Mammary epithelial cell (primary cell): ENCODE measurements at regions of chr16 and their contacts with region 1.

Region 1: GRCh38 chr16:24800586-24800985 is 45.2 kb upstream of the SLC5A11 start:
- DNase-seq: peak; percentile 79
- H3K4me3 ChIP-seq: no peak overlapping the region
- H3K27ac ChIP-seq: no peak overlapping the region
- H3K4me1 ChIP-seq: peaks cover 12% of the 10 kb centered on the region
- H3K27me3 ChIP-seq: no peaks in the 10 kb centered on the region
- CTCF ChIP-seq: peak; percentile 38 to 62

Region 2: GRCh38 chr16:24516900-24517669 is 283.5 kb before region 1 on chr16:
- CTCF ChIA-PET with region 1: no interaction called
- dilution Hi-C with region 1: no loop called
- in situ Hi-C with region 1: no loop called
- intact Hi-C with region 1: loop called (anchors 1 kb)
- DNase-seq: peak; percentile 71
- H3K4me3 ChIP-seq: no peak overlapping the region
- H3K27ac ChIP-seq: no peak overlapping the region
- H3K4me1 ChIP-seq: no peaks in the 10 kb centered on the region
- H3K27me3 ChIP-seq: no peaks in the 10 kb centered on the region
- CTCF ChIP-seq: peak; percentile 93 to 95

Region 3: GRCh38 chr16:24539291-24539849 is 261.2 kb before region 1 on chr16 and contains the start of gene RBBP6:
- CTCF ChIA-PET with region 1: interaction called, 4 read pairs
- dilution Hi-C with region 1: loop called (anchors 5 kb)
- in situ Hi-C with region 1: no loop called
- intact Hi-C with region 1: no loop called
- DNase-seq: peak; percentile 96
- H3K4me3 ChIP-seq: peak within 1 kb of the TSS; percentile 87 to 98 (median 97)
- H3K27ac ChIP-seq: peak within 1 kb of the TSS; percentile 93
- H3K4me1 ChIP-seq: peaks cover 18% of the 10 kb centered on the region
- H3K27me3 ChIP-seq: no peaks in the 10 kb centered on the region
- CTCF ChIP-seq: peak in 1 of 2 donors; percentile 38
- total RNA-seq, gene RBBP6: 33.0 to 40.4 TPM

Region 4: DNA sequence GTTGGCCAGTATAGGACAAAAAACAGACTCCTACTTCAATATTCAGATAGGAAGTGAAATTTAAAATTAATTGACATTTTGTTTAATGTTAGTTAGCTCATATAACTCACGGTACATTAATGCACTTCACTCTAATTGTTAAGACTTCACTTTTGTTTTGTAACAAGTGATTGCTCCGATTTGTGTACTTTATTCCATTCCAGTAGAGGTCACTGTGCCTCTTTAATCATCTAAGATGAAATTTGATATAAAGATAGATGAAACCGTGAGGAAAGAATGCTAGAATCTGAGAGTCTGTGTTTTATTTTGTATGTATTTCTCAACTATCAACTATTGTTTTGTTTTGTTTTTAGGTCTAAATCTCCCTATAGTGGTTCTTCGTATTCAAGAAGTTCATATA is 232.2 kb before region 1 on chr16:
- CTCF ChIA-PET with region 1: no interaction called
- dilution Hi-C with region 1: no loop called
- in situ Hi-C with region 1: loop called in 1 of 2 experiments (anchors 10 kb)
- intact Hi-C with region 1: no loop called
- DNase-seq: peak; percentile 8
- H3K4me3 ChIP-seq: no peak overlapping the region
- H3K27ac ChIP-seq: no peak overlapping the region
- H3K4me1 ChIP-seq: no peaks in the 10 kb centered on the region
- H3K27me3 ChIP-seq: no peaks in the 10 kb centered on the region
- CTCF ChIP-seq: peak; percentile 21 to 37

Region 5: GRCh38 chr16:24580665-24581064 is 219.9 kb before region 1 on chr16:
- CTCF ChIA-PET with region 1: interaction called, 6 read pairs
- dilution Hi-C with region 1: no loop called
- in situ Hi-C with region 1: loop called in 1 of 2 experiments (anchors 10 kb)
- intact Hi-C with region 1: loop called (anchors 1 kb)
- DNase-seq: peak; percentile 6
- H3K4me3 ChIP-seq: no peak overlapping the region
- H3K27ac ChIP-seq: no peak overlapping the region
- H3K4me1 ChIP-seq: peaks cover 2% of the 10 kb centered on the region
- H3K27me3 ChIP-seq: no peaks in the 10 kb centered on the region
- CTCF ChIP-seq: peak; percentile 15 to 52

Region 6: GRCh38 chr16:24635900-24636610 is 164.5 kb before region 1 on chr16:
- CTCF ChIA-PET with region 1: no interaction called
- dilution Hi-C with region 1: no loop called
- in situ Hi-C with region 1: no loop called
- intact Hi-C with region 1: loop called (anchors 5 kb)
- DNase-seq: peak; percentile 79
- H3K4me3 ChIP-seq: no peak overlapping the region
- H3K27ac ChIP-seq: no peak overlapping the region
- H3K4me1 ChIP-seq: peaks cover 18% of the 10 kb centered on the region
- H3K27me3 ChIP-seq: no peaks in the 10 kb centered on the region
- CTCF ChIP-seq: no peak

Region 7: GRCh38 chr16:24700549-24701392 is 99.8 kb before region 1 on chr16:
- CTCF ChIA-PET with region 1: no interaction called
- dilution Hi-C with region 1: no loop called
- in situ Hi-C with region 1: no loop called
- intact Hi-C with region 1: loop called (anchors 2 kb)
- DNase-seq: peak; percentile 85
- H3K4me3 ChIP-seq: no peak overlapping the region
- H3K27ac ChIP-seq: peak overlapping the region; percentile 14
- H3K4me1 ChIP-seq: peaks cover 16% of the 10 kb centered on the region
- H3K27me3 ChIP-seq: no peaks in the 10 kb centered on the region
- CTCF ChIP-seq: peak; percentile 22 to 50

Region 8: DNA sequence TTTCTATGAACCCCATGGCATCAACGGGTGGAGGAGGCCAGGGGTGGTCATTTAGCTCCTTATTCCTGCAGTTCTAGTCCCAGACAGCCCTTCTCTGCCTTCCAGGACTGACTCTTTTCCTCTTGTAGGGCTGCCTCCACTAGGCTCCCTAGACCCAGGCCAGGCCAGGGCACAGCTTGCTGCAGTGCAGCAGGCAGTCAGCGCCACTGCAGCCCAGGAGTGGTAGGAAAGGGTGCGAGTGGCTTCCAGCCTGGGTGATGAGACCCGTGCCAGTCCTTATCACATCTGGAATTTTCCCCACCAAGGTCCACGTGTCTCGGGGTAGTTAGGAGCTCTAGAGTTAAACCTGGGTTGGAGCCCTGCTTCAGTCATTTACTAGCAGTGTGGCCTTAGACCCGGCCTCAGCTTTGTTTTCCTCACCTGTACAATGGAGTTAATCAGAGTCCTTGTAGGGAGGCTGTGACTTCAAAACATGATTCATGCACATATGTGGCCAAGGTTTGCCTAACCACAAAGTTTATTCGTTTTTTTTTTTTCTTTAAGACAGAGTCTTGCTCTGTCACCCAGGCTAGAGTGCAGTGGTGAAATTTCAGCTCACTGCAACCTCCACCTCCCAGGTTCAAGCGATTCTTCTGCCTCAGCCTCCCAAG is 49.8 kb after region 1 on chr16:
- CTCF ChIA-PET with region 1: no interaction called
- dilution Hi-C with region 1: no loop called
- in situ Hi-C with region 1: no loop called
- intact Hi-C with region 1: no loop called
- DNase-seq: peak; percentile 75
- H3K4me3 ChIP-seq: no peak overlapping the region
- H3K27ac ChIP-seq: no peak overlapping the region
- H3K4me1 ChIP-seq: peaks cover 23% of the 10 kb centered on the region
- H3K27me3 ChIP-seq: no peaks in the 10 kb centered on the region
- CTCF ChIP-seq: no peak

Region 9: GRCh38 chr16:25426829-25427228 is 626.2 kb after region 1 on chr16:
- CTCF ChIA-PET with region 1: no interaction called
- dilution Hi-C with region 1: no loop called
- in situ Hi-C with region 1: no loop called
- intact Hi-C with region 1: no loop called
- DNase-seq: no peak
- H3K4me3 ChIP-seq: no peak overlapping the region
- H3K27ac ChIP-seq: no peak overlapping the region
- H3K4me1 ChIP-seq: no peaks in the 10 kb centered on the region
- H3K27me3 ChIP-seq: no peaks in the 10 kb centered on the region
- CTCF ChIP-seq: no peak